ENCODE measurements at regions of chr4 and their contacts with region 1.

Region 1: DNA sequence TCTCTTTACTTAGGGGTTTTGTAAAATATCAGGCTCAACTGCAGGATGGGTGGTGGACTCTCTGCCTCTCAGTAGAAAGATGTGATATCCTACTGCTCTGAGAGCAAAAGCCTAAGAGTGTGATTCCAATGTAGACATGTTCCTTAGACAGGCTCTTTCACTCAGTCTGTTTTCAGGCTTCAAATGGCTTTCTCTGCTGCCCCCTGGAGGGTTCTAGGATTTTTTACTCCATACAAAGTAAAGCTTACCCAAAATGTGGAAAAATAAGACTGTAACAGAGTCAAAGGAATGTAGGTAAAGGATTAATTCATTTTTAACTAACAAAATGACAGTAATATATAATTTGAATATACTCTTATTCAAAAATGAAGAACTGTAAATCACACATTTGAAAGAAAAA is 32.1 kb downstream of the ZGRF1 start:
- DNase-seq: peak; percentile 47 to 71 (median 59)
- H3K4me3 ChIP-seq: no peak overlapping the region
- H3K27ac ChIP-seq: no peak overlapping the region
- H3K4me1 ChIP-seq: no peaks in the 10 kb centered on the region
- H3K27me3 ChIP-seq: no peaks in the 10 kb centered on the region

Region 2: GRCh38 chr4:112327965-112328733 is 276.4 kb before region 1 on chr4:
- CTCF ChIA-PET with region 1: interaction called, 13 read pairs
- POLR2A ChIA-PET with region 1: no interaction called
- DNase-seq: peak; percentile 61 to 83 (median 77)
- H3K4me3 ChIP-seq: no peak overlapping the region
- H3K27ac ChIP-seq: no peak overlapping the region
- H3K4me1 ChIP-seq: no peaks in the 10 kb centered on the region
- H3K27me3 ChIP-seq: no peaks in the 10 kb centered on the region

Region 3: DNA sequence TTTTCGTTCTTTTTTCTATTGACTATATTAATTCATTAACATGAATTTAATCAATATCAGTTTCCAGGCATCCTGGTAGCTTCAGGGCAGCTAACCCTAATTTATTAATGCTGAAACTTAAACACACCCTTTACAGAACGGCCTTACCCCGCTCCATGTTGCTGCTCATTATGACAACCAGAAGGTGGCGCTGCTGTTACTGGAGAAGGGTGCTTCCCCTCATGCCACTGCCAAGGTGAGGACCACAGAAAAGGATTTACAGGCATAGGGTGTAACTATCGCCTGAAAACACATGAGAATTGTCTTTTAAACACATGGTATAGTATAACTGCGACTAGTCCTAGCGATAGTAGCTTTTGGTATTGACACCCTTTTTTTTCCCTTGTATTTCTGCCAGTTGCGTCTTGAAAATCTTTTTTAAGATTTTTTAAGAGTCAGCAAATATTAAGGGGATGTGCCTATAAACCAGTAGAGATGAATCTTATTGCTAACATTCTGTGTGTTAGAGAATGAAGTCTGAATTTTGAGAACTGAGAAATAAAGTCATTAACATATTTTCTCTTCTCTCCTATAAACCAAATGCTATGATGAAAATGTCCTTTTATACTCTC is 673.8 kb after region 1 on chr4:
- CTCF ChIA-PET with region 1: no interaction called
- POLR2A ChIA-PET with region 1: no interaction called
- DNase-seq: peak; percentile 68 to 86 (median 85)
- H3K4me3 ChIP-seq: no peak overlapping the region
- H3K27ac ChIP-seq: no peak overlapping the region
- H3K4me1 ChIP-seq: no peaks in the 10 kb centered on the region
- H3K27me3 ChIP-seq: peaks cover 0 to 3% (median 2%) of the 10 kb centered on the region in 5 experiments

Measured in common myeloid progenitor, CD34-positive (primary cell).